Psoas muscle (tissue), 8 donors: ENCODE measurements at regions of chr4 and their contacts with region 1.

Region 1: DNA sequence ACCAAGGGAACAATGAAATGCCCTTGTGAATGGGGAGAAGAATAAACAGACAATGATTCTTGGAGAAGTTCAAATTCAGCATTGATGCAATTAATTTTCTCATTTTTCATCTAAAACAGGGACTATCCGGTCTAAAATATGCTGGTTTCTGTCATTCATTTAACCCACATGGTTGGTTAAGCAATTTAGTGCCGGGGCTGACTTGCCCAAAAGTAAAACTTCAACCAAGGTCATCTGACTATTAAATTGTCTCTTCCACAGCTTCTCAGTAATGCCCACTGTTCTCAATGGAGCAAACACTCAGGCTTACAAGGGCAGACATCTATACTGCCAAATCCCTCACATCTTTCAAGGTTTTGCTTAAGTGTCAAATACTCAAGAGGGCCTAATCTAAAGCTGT is 51.3 kb downstream of the ANXA10 start:
- DNase-seq: no peak
- ATAC-seq: no peak
- H3K4me3 ChIP-seq: no peak overlapping the region
- H3K27ac ChIP-seq: no peak overlapping the region
- H3K4me1 ChIP-seq: no peaks in the 10 kb centered on the region
- H3K27me3 ChIP-seq: no peaks in the 10 kb centered on the region
- CTCF ChIP-seq: no peak

Region 2: DNA sequence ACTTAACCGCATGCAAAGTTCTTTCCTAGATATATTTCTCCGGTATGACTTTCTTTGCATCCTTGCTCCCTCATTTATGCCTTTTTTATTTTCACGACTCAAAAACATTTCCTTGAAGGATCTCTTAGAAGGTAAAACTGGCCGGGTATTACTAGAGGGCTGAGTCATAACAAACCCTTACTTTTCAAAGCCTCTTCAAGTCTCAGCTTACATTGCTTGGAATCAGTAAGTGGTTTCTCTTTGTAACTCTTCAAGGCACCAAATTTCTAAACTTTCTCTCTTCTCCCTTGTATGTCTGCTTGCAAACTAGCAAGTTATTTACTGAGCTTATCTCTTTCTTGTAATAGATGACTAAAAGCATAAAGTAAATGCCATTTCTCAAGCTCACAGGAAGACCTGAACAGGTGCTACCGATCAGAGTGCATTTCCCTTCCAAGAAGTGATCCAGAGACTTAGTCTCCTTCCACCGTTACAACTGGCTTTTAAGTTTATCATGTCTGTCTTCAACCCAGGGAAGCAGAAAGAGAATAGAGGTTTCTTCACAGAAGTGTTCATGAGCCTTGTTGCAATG is 24.2 kb after region 1 on chr4:
- intact Hi-C with region 1: loop called in 1 of 2 experiments (anchors 2 kb)
- DNase-seq: no peak
- ATAC-seq: no peak
- H3K4me3 ChIP-seq: no peak overlapping the region
- H3K27ac ChIP-seq: no peak overlapping the region
- H3K4me1 ChIP-seq: no peaks in the 10 kb centered on the region
- H3K27me3 ChIP-seq: no peaks in the 10 kb centered on the region
- CTCF ChIP-seq: no peak